Endothelial cell of umbilical vein (primary cell): ENCODE measurements at regions of chr2 and their contacts with region 1.

Region 1: GRCh38 chr2:59301466-59302402 is 1060.6 kb upstream of the FANCL start:
- DNase-seq: peak; percentile 1
- H3K4me3 ChIP-seq: no peak overlapping the region
- H3K27ac ChIP-seq: no peak overlapping the region
- H3K4me1 ChIP-seq: no peaks in the 10 kb centered on the region
- H3K27me3 ChIP-seq: no peaks in the 10 kb centered on the region
- CTCF ChIP-seq: peak; percentile 12
- POLR2A ChIP-seq: no peak

Region 2: DNA sequence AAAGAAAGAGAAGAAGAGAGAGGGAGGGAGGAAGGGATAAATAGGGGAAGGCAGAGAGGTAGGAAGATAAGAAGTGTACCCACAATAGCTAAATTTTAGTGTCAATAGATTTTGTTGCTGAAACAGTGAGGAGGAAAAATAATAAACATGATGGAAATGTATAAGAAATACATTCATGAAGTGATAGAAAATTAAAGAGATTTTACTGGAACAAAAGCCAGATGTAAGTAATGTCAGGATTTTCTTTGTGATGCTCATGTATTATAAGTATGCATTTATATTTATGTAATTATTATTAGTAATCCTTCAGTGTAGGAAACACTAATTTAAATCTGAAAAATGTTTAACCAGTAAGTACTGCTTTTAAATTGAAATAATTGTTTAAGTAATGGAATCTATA is 64.6 kb after region 1 on chr2:
- CTCF ChIA-PET with region 1: no interaction called
- POLR2A ChIA-PET with region 1: no interaction called
- dilution Hi-C with region 1: no loop called
- intact Hi-C with region 1: no loop called
- DNase-seq: no peak
- H3K4me3 ChIP-seq: no peak overlapping the region
- H3K27ac ChIP-seq: no peak overlapping the region
- H3K4me1 ChIP-seq: no peaks in the 10 kb centered on the region
- H3K27me3 ChIP-seq: no peaks in the 10 kb centered on the region
- CTCF ChIP-seq: no peak
- POLR2A ChIP-seq: no peak

Region 3: DNA sequence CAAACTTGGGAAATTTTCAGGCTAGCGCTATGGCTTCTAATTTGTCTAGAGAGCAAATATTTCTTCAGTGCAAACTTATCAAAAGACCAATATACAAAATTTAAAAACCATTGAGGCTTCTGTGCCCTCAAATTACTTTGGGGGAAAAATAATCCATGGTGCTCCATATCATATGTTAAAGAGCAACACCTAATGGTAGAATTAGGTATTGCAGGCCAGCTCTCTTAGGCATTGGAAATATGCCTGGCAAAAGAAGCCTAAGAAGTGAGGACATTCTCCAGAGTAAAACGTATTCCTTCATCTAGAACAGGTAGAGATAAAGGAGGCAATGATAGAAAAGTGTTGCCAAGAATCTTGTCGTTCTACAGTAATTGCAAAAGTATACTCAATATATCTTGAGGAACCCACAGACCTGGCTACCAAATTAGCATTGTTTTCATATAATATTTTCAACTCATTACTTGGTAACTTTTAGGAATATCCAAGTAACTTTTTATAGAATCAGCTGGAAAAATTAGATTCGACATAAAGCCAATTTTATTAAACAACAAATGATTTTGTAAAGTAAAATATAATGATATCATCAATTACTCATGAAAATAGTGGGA is 850.6 kb after region 1 on chr2:
- CTCF ChIA-PET with region 1: no interaction called
- POLR2A ChIA-PET with region 1: no interaction called
- dilution Hi-C with region 1: no loop called
- intact Hi-C with region 1: loop called (anchors 5 kb)
- DNase-seq: no peak
- H3K4me3 ChIP-seq: no peak overlapping the region
- H3K27ac ChIP-seq: no peak overlapping the region
- H3K4me1 ChIP-seq: no peaks in the 10 kb centered on the region
- H3K27me3 ChIP-seq: no peaks in the 10 kb centered on the region
- CTCF ChIP-seq: peak; percentile 17 to 33
- POLR2A ChIP-seq: no peak